ENCODE measurements at regions of chr2 and their contacts with region 1.

Region 1: GRCh38 chr2:149313512-149313972 is 16.8 kb upstream of the LYPD6 start:
- DNase-seq: peak; percentile 9
- ATAC-seq: peak; percentile 94
- H3K4me3 ChIP-seq: no peak overlapping the region
- H3K27ac ChIP-seq: no peak overlapping the region
- H3K4me1 ChIP-seq: no peaks in the 10 kb centered on the region
- H3K27me3 ChIP-seq: no peaks in the 10 kb centered on the region
- CTCF ChIP-seq: peak; percentile 61 to 80 (median 77)
- EP300 ChIP-seq: no peak
- POLR2A ChIP-seq: no peak
- RAD21 ChIP-seq: peak; percentile 77

Region 2: GRCh38 chr2:149330126-149331022 is 16.8 kb after region 1 on chr2 and contains the start of gene LYPD6:
- CTCF ChIA-PET with region 1: interaction called, 16 read pairs
- POLR2A ChIA-PET with region 1: no interaction called
- RAD21 ChIA-PET with region 1: no interaction called
- SMC1A ChIA-PET with region 1: no interaction called
- in situ Hi-C with region 1: no loop called
- intact Hi-C with region 1: no loop called
- DNase-seq: no peak
- ATAC-seq: peak; percentile 92
- H3K4me3 ChIP-seq: peak within 1 kb of the TSS; percentile 75
- H3K27ac ChIP-seq: no peak within 1 kb of the TSS
- H3K4me1 ChIP-seq: no peaks in the 10 kb centered on the region
- H3K27me3 ChIP-seq: peaks cover 2 to 9% of the 10 kb centered on the region in 2 experiments
- CTCF ChIP-seq: no peak
- EP300 ChIP-seq: no peak
- POLR2A ChIP-seq: no peak
- RAD21 ChIP-seq: no peak
- polyA plus RNA-seq, gene LYPD6: not detected